Naive thymus-derived CD4-positive, alpha-beta T cell (primary cell): ENCODE measurements at regions of chr1 and their contacts with region 1.

Region 1: DNA sequence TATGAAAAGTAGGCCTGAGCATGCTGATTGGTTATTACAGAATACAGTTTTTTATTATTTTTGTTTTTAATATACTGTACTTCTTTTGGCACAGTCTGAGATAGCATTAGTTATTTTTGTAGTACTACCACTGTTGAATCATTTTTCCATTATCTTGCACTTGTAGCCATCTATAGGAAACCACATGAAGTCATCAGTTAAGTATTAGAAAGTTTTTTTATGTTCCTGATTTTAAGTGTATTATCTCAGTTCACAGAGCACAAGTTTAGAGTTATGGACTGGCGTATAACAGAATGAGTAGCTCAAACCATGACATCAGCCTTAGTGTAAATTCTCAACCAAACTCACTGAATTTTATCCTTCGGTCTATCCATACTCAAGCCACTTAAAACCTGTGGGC is 22.8 kb downstream of the DHX9 start:
- DNase-seq: no peak
- ATAC-seq: no peak
- H3K4me3 ChIP-seq: no peak overlapping the region
- H3K4me3 Mint-ChIP-seq: no peak overlapping the region
- H3K27ac ChIP-seq: no peak overlapping the region
- H3K27ac Mint-ChIP-seq: peak overlapping the region in 2 of 9 donors; percentile 9 to 49
- H3K4me1 ChIP-seq: no peaks in the 10 kb centered on the region
- H3K4me1 Mint-ChIP-seq: peaks cover 1 to 51% (median 18%) of the 10 kb centered on the region in 7 donors
- H3K27me3 ChIP-seq: no peaks in the 10 kb centered on the region
- H3K27me3 Mint-ChIP-seq: no peaks in the 10 kb centered on the region

Region 2: DNA sequence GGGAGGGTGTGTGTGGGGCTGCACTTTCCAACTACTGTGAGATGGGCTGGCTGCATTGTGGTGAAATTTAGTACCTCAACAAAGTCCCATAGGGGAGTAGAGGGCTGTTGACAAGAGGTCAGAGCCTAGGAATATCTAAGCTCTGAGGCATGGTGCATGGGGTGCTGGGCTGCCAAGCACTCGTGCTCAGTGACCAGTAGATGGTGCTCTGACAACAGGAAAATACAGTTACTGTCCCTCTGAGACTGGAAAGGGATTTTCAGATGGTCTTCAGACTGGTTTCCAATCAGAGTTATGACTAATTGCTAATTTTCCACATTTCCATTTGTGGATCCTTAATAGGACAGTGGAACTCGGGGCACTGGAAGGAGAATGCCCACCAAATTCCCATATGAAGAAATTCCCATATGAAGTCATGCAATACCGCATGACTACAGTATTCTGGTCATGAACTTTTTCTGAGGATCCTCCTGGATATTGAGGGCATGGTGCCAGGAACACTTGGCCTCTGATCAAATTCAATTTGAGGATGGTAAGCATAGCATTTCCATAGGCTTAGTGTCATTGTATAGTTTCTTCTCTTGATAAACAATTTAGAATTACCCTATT is 1382.8 kb before region 1 on chr1:
- CTCF ChIA-PET with region 1: no interaction called
- POLR2A ChIA-PET with region 1: no interaction called
- intact Hi-C with region 1: no loop called
- DNase-seq: peak in 5 of 9 donors; percentile 25 to 40 (median 26)
- ATAC-seq: peak; percentile 64
- H3K4me3 ChIP-seq: no peak overlapping the region
- H3K4me3 Mint-ChIP-seq: no peak overlapping the region
- H3K27ac ChIP-seq: no peak overlapping the region
- H3K27ac Mint-ChIP-seq: no peak overlapping the region
- H3K4me1 ChIP-seq: no peaks in the 10 kb centered on the region
- H3K4me1 Mint-ChIP-seq: peaks cover 9 to 16% (median 12%) of the 10 kb centered on the region in 7 donors
- H3K27me3 ChIP-seq: peaks cover 0 to 5% of the 10 kb centered on the region in 2 donors
- H3K27me3 Mint-ChIP-seq: peaks cover 34 to 58% (median 46%) of the 10 kb centered on the region in 5 donors

Region 3: DNA sequence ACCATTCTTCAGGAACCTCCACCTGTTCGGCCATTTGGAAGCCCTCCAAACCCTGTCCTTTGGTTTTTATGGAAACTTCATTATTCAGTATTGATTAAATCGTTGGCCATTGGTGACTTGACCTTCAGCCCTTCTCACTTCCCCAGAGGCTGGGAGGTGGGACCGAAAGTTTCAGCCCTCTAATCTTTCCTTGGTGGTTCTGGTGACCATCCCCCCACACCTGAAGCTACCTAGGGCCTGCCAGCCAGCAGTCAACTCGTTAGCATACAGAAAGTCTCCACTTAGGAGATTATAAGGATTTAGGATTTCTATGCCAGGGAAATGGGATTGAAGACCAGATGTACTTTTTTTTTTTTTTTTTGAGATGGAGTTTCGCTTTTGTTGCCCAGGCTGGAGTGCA is 16.1 kb before region 1 on chr1:
- CTCF ChIA-PET with region 1: no interaction called
- POLR2A ChIA-PET with region 1: no interaction called
- intact Hi-C with region 1: loop called in 1 of 2 experiments (anchors 2 kb)
- DNase-seq: no peak
- ATAC-seq: no peak
- H3K4me3 ChIP-seq: no peak overlapping the region
- H3K4me3 Mint-ChIP-seq: peak overlapping the region in 2 of 10 donors; percentile 29 to 39
- H3K27ac ChIP-seq: no peak overlapping the region
- H3K27ac Mint-ChIP-seq: peak overlapping the region in 3 of 9 donors; percentile 52 to 65 (median 58)
- H3K4me1 ChIP-seq: peaks cover 37 to 44% of the 10 kb centered on the region in 2 donors
- H3K4me1 Mint-ChIP-seq: peaks cover 50 to 98% (median 92%) of the 10 kb centered on the region in 7 donors
- H3K27me3 ChIP-seq: no peaks in the 10 kb centered on the region
- H3K27me3 Mint-ChIP-seq: no peaks in the 10 kb centered on the region

Region 4: DNA sequence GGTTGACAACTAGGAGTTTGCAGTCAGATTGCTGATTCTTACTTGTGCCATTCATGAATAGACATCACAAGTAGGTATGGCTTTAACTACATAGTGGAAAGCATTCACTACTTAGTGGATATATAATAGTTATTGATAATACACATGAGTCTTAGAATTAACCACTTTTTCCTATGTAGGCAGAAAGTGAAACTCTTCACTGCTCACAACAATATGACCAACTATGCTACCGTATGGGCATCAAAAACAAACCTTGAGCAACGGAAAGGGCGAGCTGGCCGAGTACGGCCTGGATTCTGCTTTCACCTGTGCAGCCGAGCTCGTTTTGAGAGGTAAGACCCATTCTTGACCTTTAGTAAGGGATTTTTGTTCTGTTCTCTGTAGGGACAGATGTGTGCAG is 15.8 kb after region 1 on chr1:
- CTCF ChIA-PET with region 1: no interaction called
- POLR2A ChIA-PET with region 1: interaction called, 3 read pairs
- intact Hi-C with region 1: loop called (anchors 2 kb)
- DNase-seq: peak in 1 of 9 donors; percentile 30
- ATAC-seq: no peak
- H3K4me3 ChIP-seq: no peak overlapping the region
- H3K4me3 Mint-ChIP-seq: no peak overlapping the region
- H3K27ac ChIP-seq: no peak overlapping the region
- H3K27ac Mint-ChIP-seq: peak overlapping the region in 3 of 9 donors; percentile 21 to 54 (median 50)
- H3K4me1 ChIP-seq: no peaks in the 10 kb centered on the region
- H3K4me1 Mint-ChIP-seq: peaks cover 3 to 21% (median 6%) of the 10 kb centered on the region in 7 donors
- H3K27me3 ChIP-seq: no peaks in the 10 kb centered on the region
- H3K27me3 Mint-ChIP-seq: no peaks in the 10 kb centered on the region